ENCODE measurements at regions of chr7 and their contacts with region 1.

Region 1: DNA sequence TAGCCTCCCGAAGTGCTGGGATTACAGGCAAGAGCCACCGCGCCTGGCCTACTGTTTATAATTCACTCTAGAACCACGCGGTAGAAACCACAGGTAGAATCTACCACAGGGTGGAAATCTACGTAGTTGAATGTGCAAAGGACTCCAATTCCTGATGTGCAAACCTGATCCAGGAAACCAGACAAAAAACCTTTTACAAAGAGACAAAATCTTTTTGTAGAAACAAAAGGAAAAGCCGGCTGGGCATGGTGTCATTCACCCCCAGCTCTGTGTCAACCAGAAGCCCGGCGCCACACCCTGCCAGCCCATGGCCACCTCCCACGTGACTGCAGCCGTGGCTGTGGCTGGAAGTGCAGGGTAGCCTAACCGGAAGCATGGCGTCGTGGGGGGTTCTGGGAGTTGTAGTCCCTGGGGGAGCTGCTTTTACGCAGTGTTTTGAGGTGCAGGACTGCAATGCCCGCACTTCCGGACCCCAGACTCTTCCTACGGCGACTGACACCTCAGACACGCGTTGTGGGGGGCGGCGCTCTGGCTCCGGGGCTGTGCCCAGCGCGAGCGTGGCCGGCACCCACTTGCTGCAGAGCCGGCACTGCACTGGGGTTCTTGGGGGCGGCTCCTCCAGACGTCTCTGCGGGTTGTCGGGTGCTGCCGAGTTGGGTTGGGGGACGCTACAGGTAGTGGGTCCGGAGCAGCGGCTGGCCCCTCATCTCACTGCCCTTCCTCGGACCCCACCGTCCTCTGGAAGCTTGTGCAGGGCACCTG is 41.5 kb upstream of the RNF216 start:
- DNase-seq: peak; percentile 99
- H3K4me3 Mint-ChIP-seq: peak overlapping the region; percentile 77
- H3K27ac Mint-ChIP-seq: peak overlapping the region; percentile 77
- H3K4me1 Mint-ChIP-seq: peaks cover 26% of the 10 kb centered on the region
- H3K27me3 Mint-ChIP-seq: no peaks in the 10 kb centered on the region

Region 2: DNA sequence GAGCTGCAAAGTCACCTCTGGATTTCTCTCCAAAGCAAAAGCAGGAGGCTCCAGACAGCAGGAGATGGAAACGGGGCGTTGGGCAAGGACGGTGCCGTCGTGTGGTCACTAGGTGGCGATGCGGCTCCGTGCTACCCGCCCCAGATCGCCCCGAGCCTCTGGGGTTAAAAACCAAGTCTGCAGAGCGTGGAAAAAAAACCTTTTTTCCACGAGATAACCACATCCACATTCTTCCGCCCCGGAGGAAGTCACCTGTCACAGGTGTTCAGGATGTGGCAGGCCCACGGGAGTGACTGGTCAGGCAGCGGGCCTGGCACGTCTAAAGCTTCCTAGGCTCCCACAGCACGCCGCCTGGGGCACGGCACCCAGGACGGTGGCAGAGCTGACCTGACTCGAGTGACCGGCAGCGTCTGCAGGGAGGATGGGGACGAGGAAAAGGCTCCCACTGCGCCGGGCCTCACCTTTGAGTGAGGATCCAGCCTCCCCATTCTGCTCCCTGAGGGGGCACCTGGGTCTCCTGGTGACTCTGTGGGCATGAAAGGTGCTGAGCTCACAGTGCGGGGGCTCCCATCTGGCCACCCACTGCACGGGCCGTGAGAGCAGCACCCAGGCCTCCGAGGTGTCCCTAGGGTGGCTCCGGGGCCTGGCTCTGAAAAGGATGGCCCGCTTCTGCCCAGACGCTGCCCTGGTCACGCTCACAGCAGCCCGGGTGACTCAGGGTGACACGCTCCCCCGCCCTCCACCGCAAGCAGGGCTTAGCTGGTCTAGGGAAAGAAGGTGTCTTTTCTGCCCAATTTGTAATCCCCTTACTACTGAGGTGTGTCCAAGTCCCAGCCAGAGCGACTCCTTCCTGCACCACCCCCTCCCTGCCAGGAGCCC is 328.0 kb before region 1 on chr7:
- CTCF ChIA-PET with region 1: interaction called, 6 read pairs
- intact Hi-C with region 1: loop called (anchors 2 kb)
- DNase-seq: peak; percentile 88
- H3K4me3 Mint-ChIP-seq: no peak overlapping the region
- H3K27ac Mint-ChIP-seq: no peak overlapping the region
- H3K4me1 Mint-ChIP-seq: peaks cover 26% of the 10 kb centered on the region
- H3K27me3 Mint-ChIP-seq: no peaks in the 10 kb centered on the region

Region 3: GRCh38 chr7:5704534-5704922 is 118.4 kb before region 1 on chr7:
- CTCF ChIA-PET with region 1: no interaction called
- intact Hi-C with region 1: loop called (anchors 1 kb)
- DNase-seq: peak; percentile 92
- H3K4me3 Mint-ChIP-seq: no peak overlapping the region
- H3K27ac Mint-ChIP-seq: no peak overlapping the region
- H3K4me1 Mint-ChIP-seq: peaks cover 75% of the 10 kb centered on the region
- H3K27me3 Mint-ChIP-seq: no peaks in the 10 kb centered on the region

Region 4: DNA sequence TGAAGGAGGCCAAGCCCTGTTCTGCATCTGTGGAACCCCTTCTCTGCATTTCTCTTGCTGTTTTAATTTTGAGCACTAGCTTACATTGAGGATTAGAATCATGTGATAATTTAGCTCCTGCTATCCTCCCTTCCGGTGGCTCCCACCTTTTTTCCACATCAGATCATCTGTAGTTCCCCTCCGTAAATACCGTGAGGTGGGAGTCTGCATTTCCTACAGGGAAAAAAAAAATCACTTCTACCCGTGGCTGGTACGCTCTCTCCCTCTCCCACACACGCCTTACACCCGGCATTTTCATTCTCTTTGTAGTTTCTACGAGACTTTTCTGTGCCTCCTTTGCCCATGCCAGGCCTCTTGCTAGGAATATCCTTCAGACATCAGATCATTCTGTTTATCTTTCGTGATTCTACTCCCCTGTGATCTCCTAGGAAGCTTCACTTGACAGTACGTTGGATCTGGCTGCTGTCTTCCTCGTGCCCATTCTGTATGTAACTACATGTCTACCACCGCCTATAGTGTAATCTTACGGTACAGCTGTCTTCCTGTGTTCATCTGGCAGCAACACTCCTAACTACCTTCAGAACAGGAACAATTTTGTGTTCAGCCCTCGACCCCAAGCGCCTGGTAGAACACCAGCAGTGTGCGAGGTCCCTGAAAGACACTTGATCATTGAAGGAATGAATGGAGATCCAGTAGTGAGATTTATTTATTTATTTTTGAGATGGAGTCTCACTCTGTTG is 16.0 kb after region 1 on chr7:
- CTCF ChIA-PET with region 1: interaction called, 14 read pairs
- intact Hi-C with region 1: loop called (anchors 2 kb)
- DNase-seq: no peak
- H3K4me3 Mint-ChIP-seq: peak overlapping the region; percentile 64
- H3K27ac Mint-ChIP-seq: peak overlapping the region; percentile 69
- H3K4me1 Mint-ChIP-seq: peaks cover 28% of the 10 kb centered on the region
- H3K27me3 Mint-ChIP-seq: no peaks in the 10 kb centered on the region

Region 5: DNA sequence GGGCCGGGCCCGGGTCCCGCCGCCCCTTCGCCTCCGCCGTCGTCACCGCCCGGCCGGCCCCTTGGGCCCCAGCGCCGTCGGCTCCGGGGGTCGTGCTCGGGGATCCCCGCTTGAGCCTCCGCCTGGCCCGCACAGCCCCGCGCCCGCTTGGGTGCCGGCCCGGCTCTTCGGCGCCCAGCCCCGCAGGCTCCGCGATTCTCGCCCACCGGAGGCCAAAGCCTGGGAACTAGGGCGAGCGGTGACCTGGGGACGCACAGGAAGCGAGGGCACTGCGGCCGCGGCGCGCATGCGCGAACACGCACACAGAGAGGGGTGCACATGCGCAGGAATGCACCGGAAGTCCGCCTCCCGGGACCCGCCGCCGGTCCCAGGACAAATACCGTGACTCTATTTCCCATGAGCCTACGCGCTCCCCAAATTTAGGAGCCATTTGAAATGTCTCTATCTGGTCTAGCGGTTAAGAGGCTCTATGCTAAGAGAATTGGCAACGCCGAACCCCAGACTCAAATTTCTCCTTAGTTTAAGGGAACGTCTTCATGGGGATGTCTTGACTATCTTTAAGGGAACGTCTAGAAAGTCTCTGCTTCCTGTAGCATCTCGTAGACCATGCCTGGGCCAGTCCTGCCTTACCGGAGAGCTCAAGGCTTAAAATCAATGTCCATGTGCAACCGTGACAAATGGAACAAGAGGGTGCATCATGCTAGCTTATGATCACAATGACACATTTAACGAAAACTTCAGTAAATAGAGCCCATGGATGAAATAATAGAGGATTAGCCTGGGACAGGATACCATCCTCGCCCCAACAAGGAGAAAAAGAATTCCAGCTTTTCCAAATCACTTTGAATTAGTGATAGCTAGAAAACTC is 884.0 kb after region 1 on chr7 and contains the start of gene ZNF12:
- CTCF ChIA-PET with region 1: no interaction called
- intact Hi-C with region 1: loop called (anchors 1 kb)
- DNase-seq: peak; percentile 98
- H3K4me3 Mint-ChIP-seq: peak within 1 kb of the TSS; percentile 91
- H3K27ac Mint-ChIP-seq: peak within 1 kb of the TSS; percentile 91
- H3K4me1 Mint-ChIP-seq: peaks cover 35% of the 10 kb centered on the region
- H3K27me3 Mint-ChIP-seq: no peaks in the 10 kb centered on the region
- total RNA-seq, gene ZNF12: 12.8 to 13.3 TPM